Esophagus muscularis mucosa (tissue), 4 donors: ENCODE measurements at regions of chr4 and their contacts with region 1.

Region 1: DNA sequence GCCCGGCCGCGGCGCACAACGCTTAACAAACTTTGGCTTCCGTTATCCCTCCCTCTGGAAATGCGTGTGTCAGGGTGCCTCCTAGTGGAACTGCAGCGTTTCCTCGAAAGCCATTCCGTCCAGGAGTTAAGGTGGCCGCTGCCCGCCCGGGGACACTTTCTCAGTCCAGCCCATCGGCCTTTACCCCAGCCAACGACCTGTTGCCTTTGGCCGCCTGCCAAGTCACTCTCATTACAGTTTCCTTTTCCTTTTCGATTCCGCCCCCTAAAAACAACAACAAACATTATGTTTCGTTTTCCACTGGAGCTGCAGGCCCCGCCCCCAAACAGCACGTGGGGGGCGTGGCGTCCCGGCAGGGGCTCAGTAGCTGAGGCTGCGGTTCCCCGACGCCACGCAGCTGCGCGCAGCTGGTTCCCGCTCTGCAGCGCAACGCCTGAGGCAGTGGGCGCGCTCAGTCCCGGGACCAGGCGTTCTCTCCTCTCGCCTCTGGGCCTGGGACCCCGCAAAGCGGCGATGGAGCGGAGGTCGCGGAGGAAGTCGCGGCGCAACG is at the start of gene HERC5:
- DNase-seq: peak; percentile 96
- H3K4me3 ChIP-seq: peak within 1 kb of the TSS; percentile 77 to 90 (median 81)
- H3K27ac ChIP-seq: peak within 1 kb of the TSS; percentile 71 to 91 (median 85)
- H3K4me1 ChIP-seq: peaks cover 0 to 17% (median 14%) of the 10 kb centered on the region in 4 donors
- H3K27me3 ChIP-seq: no peaks in the 10 kb centered on the region
- CTCF ChIP-seq: peak; percentile 68 to 70 (median 68)
- EP300 ChIP-seq: no peak
- POLR2A ChIP-seq: no peak
- total RNA-seq, gene HERC5: 2.9 to 4.5 (median 3.9) TPM

Region 2: DNA sequence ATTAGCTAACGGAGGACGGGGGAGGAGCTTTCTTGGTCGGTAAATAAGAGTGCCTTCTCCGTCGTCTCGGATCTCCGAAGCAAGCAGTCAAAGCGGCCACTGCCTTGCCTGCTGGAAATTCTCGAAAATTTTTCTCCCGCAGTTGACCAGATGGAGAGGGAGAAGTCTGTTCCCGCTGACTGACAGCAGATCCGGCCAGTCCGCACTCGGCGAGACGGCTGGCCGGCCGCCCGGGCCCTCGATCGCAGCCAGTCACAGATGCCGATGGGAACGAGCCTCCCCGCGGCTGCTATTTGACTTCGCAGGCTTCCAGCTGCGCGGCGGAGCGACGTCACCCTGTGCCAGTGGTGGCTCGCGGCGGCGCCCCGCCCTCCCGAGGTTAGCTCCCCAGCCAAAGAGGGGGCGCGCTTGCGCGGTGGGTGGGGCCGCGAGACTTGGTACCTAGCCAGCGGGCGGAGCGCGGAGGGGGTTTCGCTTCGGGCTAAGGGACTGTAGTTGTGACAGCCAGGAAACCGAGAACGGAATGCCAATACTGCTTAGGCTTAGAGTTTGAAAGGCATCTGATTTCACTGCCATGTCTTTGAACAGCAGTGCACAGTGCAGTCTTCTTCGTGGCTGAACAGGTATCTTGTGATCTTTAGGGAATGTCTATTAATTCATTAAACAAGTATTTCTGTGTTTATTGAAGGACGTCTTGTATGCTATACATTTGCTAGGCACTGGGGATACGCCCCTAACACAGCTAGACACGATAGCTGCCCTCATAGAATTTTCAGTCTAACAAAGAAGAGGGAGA is 172.2 kb before region 1 on chr4 and contains the start of gene PPM1K:
- intact Hi-C with region 1: loop called (anchors 5 kb)
- DNase-seq: peak; percentile 100
- H3K4me3 ChIP-seq: peak within 1 kb of the TSS; percentile 75 to 96 (median 82)
- H3K27ac ChIP-seq: peak within 1 kb of the TSS; percentile 97 to 100 (median 99)
- H3K4me1 ChIP-seq: peaks cover 22 to 55% (median 46%) of the 10 kb centered on the region in 4 donors
- H3K27me3 ChIP-seq: no peaks in the 10 kb centered on the region
- CTCF ChIP-seq: peak; percentile 14 to 29 (median 19)
- EP300 ChIP-seq: no peak
- POLR2A ChIP-seq: peak; percentile 27
- total RNA-seq, gene PPM1K: 35.7 to 54.2 (median 38.3) TPM

Region 3: DNA sequence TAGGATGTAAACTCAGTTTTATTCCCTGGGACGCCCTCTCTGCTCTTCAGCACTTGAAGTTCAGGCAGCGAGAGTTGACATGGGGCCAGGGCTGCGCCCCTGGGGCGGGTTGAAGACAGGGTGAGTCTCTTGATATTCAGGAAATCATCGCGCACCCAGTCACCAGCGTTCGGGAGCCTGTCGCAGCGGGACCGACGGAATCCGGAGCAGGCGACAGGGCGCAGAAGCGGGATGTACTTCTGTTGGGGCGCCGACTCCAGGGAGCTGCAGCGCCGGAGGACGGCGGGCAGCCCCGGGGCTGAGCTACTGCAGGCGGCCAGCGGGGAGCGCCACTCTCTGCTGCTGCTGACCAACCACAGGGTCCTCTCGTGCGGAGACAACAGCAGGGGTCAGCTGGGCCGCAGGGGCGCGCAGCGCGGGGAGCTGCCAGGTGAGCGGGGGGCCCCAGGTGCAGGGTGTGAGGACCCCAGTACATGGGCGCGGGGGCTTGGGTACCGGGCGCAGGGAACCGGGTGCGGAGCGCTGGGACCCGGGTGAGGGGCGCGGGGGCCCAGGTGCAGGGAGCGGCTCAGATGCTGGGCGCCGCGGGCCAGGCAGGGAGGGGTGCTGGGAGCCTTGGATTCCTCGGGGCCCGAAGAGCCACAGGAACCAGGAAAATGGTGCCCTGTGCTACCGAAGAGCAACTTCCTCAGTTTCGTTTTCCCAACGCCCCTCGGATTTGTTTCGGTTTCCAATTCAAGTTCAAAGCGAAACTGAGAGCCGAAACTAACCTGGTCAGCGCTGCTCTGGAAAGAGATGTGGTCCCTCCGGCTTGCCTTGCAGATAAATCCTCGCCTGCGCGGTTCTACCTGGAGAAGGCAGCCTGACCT is 77.9 kb before region 1 on chr4 and contains the start of gene HERC6:
- intact Hi-C with region 1: loop called (anchors 5 kb)
- DNase-seq: no peak
- H3K4me3 ChIP-seq: peak within 1 kb of the TSS; percentile 76 to 100 (median 86)
- H3K27ac ChIP-seq: peak within 1 kb of the TSS; percentile 82 to 94 (median 87)
- H3K4me1 ChIP-seq: peaks cover 0 to 10% (median 5%) of the 10 kb centered on the region in 4 donors
- H3K27me3 ChIP-seq: no peaks in the 10 kb centered on the region
- CTCF ChIP-seq: peak; percentile 58 to 80 (median 66)
- EP300 ChIP-seq: no peak
- POLR2A ChIP-seq: no peak
- total RNA-seq, gene HERC6: 3.8 to 5.2 (median 4.9) TPM